Psoas muscle (tissue), 8 donors: ENCODE measurements at regions of chr6 and their contacts with region 1.

Region 1: GRCh38 chr6:35601331-35602132 is 87.2 kb downstream of the FKBP5 start:
- DNase-seq: peak; percentile 46 to 73
- ATAC-seq: peak; percentile 63 to 82 (median 76)
- H3K4me3 ChIP-seq: peak overlapping the region; percentile 53
- H3K27ac ChIP-seq: peak overlapping the region; percentile 95
- H3K4me1 ChIP-seq: peaks cover 84% of the 10 kb centered on the region
- H3K27me3 ChIP-seq: no peaks in the 10 kb centered on the region
- CTCF ChIP-seq: no peak

Region 2: DNA sequence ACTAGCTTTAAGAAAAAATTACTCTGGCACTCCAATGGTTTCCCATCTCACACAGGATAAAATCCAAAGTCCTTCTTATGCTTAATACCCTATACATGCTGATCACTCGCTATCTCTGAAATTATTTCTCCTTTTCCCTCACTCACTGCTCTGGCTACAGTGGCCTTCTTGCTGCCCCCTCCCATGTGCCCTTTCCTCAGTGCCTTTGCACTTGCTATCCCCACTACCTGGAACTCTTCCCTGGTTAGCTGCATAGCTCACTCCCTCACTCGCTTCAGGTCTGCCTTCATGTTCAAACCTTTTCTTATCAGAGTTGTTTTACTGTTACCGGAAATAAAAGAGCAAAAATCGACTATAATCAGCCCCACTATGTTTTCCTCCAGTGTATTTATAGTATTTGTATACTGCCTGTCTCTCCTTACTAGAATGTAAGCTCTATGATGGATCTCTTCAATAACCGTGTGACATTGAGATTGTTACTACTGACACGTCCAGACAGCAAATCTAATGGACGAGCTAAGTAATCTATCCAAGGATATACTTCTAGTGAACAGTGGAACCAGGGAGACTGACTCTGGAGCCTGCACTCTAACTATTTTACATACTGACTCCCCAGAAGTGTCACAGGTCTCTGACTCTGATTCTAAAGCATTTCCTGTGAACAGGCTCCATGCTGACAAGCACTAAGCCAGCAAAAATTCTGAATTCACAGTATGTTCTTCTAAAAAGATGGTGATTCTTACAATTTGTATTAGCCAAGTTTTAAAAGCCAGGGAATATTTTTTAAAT is 62.1 kb after region 1 on chr6:
- intact Hi-C with region 1: loop called in 1 of 2 experiments (anchors 10 kb)
- DNase-seq: no peak
- ATAC-seq: peak; percentile 13 to 66 (median 34)
- H3K4me3 ChIP-seq: no peak overlapping the region
- H3K27ac ChIP-seq: peak overlapping the region; percentile 64
- H3K4me1 ChIP-seq: peaks cover 60% of the 10 kb centered on the region
- H3K27me3 ChIP-seq: no peaks in the 10 kb centered on the region
- CTCF ChIP-seq: no peak

Region 3: GRCh38 chr6:35727935-35728682 is 126.6 kb after region 1 on chr6:
- intact Hi-C with region 1: loop called in 1 of 2 experiments (anchors 5 kb)
- DNase-seq: peak; percentile 96 to 98
- ATAC-seq: peak; percentile 49 to 75 (median 60)
- H3K4me3 ChIP-seq: peak overlapping the region; percentile 75
- H3K27ac ChIP-seq: peak overlapping the region; percentile 99
- H3K4me1 ChIP-seq: peaks cover 73% of the 10 kb centered on the region
- H3K27me3 ChIP-seq: no peaks in the 10 kb centered on the region
- CTCF ChIP-seq: no peak